IMR-90 (cell line): ENCODE measurements at regions of chr6 and their contacts with region 1.

Region 1: DNA sequence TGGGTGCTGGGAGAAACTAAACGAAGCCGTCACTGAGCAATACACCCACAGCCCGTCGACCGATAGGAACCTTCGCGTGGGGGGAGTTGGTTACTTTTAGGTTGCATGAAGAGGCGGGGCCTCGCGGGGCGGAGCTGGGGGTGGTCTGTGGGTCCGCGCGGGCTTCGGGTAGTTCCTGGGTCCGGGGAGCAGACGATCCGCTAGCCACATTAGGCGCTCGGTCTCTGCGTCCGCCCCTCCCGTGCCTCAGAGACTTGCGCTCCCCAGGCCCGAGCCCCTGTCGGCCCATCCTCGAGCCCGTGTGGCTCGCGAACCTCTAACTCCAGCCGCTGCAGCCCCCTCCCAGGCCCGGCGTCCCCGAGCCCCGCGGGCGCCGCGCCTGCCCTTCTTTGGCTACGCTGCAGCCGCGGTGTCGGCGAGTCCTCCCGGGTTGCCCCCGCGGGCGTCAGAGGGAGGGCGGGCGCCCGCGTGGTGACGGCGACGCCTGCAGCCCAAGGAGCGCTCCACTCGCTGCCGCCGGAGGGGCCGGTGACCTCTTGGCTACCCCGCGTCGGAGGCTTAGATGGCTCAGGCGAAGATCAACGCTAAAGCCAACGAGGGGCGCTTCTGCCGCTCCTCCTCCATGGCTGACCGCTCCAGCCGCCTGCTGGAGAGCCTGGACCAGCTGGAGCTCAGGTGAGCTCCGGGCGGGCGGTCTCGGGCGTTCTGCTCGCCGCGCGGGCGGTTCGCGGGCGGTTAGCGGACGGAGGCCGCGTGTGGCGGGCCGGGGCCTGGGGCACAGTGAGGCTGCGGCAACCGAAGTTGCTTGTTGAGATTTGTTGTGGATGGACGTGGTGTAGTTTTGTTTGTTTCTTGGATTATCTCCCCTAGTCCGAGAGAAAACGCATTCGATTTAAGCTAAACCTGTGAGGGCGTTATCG is at the start of gene BAG2:
- DNase-seq: peak; percentile 90
- ATAC-seq: peak; percentile 89
- H3K4me3 ChIP-seq: peak within 1 kb of the TSS; percentile 97
- H3K27ac ChIP-seq: peak within 1 kb of the TSS; percentile 98
- H3K4me1 ChIP-seq: peaks cover 9% of the 10 kb centered on the region
- H3K27me3 ChIP-seq: no peaks in the 10 kb centered on the region
- CTCF ChIP-seq: no peak
- POLR2A ChIP-seq: peak; percentile 85
- RAD21 ChIP-seq: no peak
- total RNA-seq, gene BAG2: 10.0 and 19.2 TPM in 2 replicates

Region 2: GRCh38 chr6:56955171-56956045 is 217.0 kb before region 1 on chr6:
- CTCF ChIA-PET with region 1: no interaction called
- POLR2A ChIA-PET with region 1: no interaction called
- dilution Hi-C with region 1: no loop called
- in situ Hi-C with region 1: no loop called
- intact Hi-C with region 1: loop called (anchors 5 kb)
- DNase-seq: peak; percentile 91
- ATAC-seq: peak; percentile 78
- H3K4me3 ChIP-seq: peak overlapping the region; percentile 88
- H3K27ac ChIP-seq: peak overlapping the region; percentile 73
- H3K4me1 ChIP-seq: peaks cover 12% of the 10 kb centered on the region
- H3K27me3 ChIP-seq: no peaks in the 10 kb centered on the region
- CTCF ChIP-seq: peak; percentile 94
- POLR2A ChIP-seq: no peak; the same call in 1 of the 2 replicates
- RAD21 ChIP-seq: peak; percentile 72

Region 3: GRCh38 chr6:57048577-57048976 is 123.8 kb before region 1 on chr6:
- CTCF ChIA-PET with region 1: no interaction called
- POLR2A ChIA-PET with region 1: no interaction called
- dilution Hi-C with region 1: no loop called
- in situ Hi-C with region 1: no loop called
- intact Hi-C with region 1: loop called (anchors 5 kb)
- DNase-seq: peak; percentile 25
- ATAC-seq: no peak
- H3K4me3 ChIP-seq: peak overlapping the region; percentile 13; the same call in 1 of the 2 replicates
- H3K27ac ChIP-seq: no peak overlapping the region
- H3K4me1 ChIP-seq: no peaks in the 10 kb centered on the region; the same call in 1 of the 2 replicates
- H3K27me3 ChIP-seq: no peaks in the 10 kb centered on the region
- CTCF ChIP-seq: no peak
- POLR2A ChIP-seq: no peak
- RAD21 ChIP-seq: no peak

Region 4: GRCh38 chr6:57089687-57090460 is 82.5 kb before region 1 on chr6 and contains the start of gene ZNF451:
- CTCF ChIA-PET with region 1: no interaction called
- POLR2A ChIA-PET with region 1: no interaction called
- dilution Hi-C with region 1: no loop called
- in situ Hi-C with region 1: no loop called
- intact Hi-C with region 1: loop called (anchors 1 kb)
- DNase-seq: peak; percentile 95
- ATAC-seq: peak; percentile 91
- H3K4me3 ChIP-seq: peak within 1 kb of the TSS; percentile 43
- H3K27ac ChIP-seq: peak within 1 kb of the TSS; percentile 65
- H3K4me1 ChIP-seq: peaks cover 10% of the 10 kb centered on the region
- H3K27me3 ChIP-seq: no peaks in the 10 kb centered on the region
- CTCF ChIP-seq: 0 out of 2 replicates have a peak, but pooled peaks have one; percentile 8
- POLR2A ChIP-seq: peak; percentile 87
- RAD21 ChIP-seq: 0 out of 2 replicates have a peak, but pooled peaks have one; percentile 11
- total RNA-seq, gene ZNF451: 48.6 and 63.0 TPM in 2 replicates

Region 5: DNA sequence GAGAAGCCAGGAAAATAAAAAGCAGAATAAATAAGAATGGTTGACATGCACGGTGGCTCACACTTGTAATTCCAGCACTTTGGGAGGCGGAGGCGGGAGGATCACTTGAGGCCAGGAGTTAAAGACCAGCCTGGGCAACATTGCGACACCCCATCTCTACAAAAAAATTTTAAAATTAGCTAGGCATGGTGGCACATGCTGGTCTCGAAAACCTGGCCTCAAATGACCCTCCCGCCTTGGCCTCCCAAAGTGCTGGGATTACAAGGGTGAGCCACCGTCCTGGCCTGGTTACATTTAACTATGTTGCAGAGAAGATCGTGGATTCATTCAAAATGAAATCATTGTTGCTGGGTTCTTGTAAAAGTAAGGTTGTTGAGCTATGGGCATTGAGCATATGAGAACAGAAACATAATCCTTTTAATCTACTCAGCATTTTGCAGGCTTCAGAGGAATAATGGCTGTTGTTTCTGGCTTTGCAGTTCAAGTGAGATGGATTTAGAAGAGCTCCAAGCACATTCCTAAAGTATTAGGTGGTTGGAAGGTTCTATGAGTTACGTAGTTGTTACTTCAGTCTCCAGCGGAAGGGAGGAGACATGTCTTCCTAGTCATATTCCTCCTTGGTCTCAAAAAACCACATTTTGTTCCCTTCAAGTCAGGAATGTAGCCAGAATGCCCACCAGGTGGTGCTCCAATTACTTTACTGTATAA is 95.3 kb after region 1 on chr6:
- CTCF ChIA-PET with region 1: no interaction called
- POLR2A ChIA-PET with region 1: no interaction called
- dilution Hi-C with region 1: no loop called
- in situ Hi-C with region 1: no loop called
- intact Hi-C with region 1: loop called (anchors 2 kb)
- DNase-seq: peak; percentile 99
- ATAC-seq: peak; percentile 89
- H3K4me3 ChIP-seq: no peak overlapping the region
- H3K27ac ChIP-seq: peak overlapping the region; percentile 93
- H3K4me1 ChIP-seq: peaks cover 16% of the 10 kb centered on the region
- H3K27me3 ChIP-seq: no peaks in the 10 kb centered on the region
- CTCF ChIP-seq: peak; percentile 85
- POLR2A ChIP-seq: no peak
- RAD21 ChIP-seq: peak; percentile 70